ENCODE measurements at regions of chr15 and their contacts with region 1.

Region 1: GRCh38 chr15:57541805-57542504 is 49.7 kb upstream of the MYZAP start:
- DNase-seq: peak in 1 of 2 experiments; percentile 83
- H3K4me3 ChIP-seq: no peak overlapping the region
- H3K27ac ChIP-seq: no peak overlapping the region
- H3K4me1 ChIP-seq: 0 out of 7 replicates have a peak, but pooled peaks cover 0 to 1% (median 0%) of the 10 kb centered on the region in 4 experiments
- H3K27me3 ChIP-seq: no peaks in the 10 kb centered on the region
- CTCF ChIP-seq: peak; percentile 63 to 85 (median 70)
- EP300 ChIP-seq: no peak
- POLR2A ChIP-seq: no peak
- RAD21 ChIP-seq: peak; percentile 56 to 65

Region 2: GRCh38 chr15:57551717-57552677 is 10.0 kb after region 1 on chr15:
- CTCF ChIA-PET with region 1: interaction called, 29 read pairs
- POLR2A ChIA-PET with region 1: no interaction called
- DNase-seq: peak in 1 of 2 experiments; percentile 51
- H3K4me3 ChIP-seq: no peak overlapping the region
- H3K27ac ChIP-seq: peak overlapping the region; percentile 31; the same call in 1 of the 2 replicates
- H3K4me1 ChIP-seq: peaks cover 0 to 13% (median 5%) of the 10 kb centered on the region in 4 experiments; a peak in 6 of 7 replicates
- H3K27me3 ChIP-seq: no peaks in the 10 kb centered on the region
- CTCF ChIP-seq: no peak
- EP300 ChIP-seq: no peak
- POLR2A ChIP-seq: peak in 1 of 2 experiments; percentile 21; a peak in 1 of 3 replicates
- RAD21 ChIP-seq: no peak

Region 3: GRCh38 chr15:57586661-57587424 is 44.9 kb after region 1 on chr15:
- CTCF ChIA-PET with region 1: no interaction called
- POLR2A ChIA-PET with region 1: no interaction called
- DNase-seq: no peak
- H3K4me3 ChIP-seq: no peak overlapping the region
- H3K27ac ChIP-seq: no peak overlapping the region
- H3K4me1 ChIP-seq: peaks cover 0 to 4% (median 3%) of the 10 kb centered on the region in 4 experiments; a peak in 4 of 7 replicates
- H3K27me3 ChIP-seq: peaks cover 0 to 12% (median 5%) of the 10 kb centered on the region in 4 experiments; a peak in 3 of 7 replicates
- CTCF ChIP-seq: no peak
- EP300 ChIP-seq: no peak
- POLR2A ChIP-seq: no peak
- RAD21 ChIP-seq: no peak

Measured in H1 (cell line).